B cell (primary cell): ENCODE measurements at regions of chr5 and their contacts with region 1.

Region 1: GRCh38 chr5:125006011-125006685 is 259.7 kb upstream of the ZNF608 start:
- DNase-seq: peak; percentile 80
- ATAC-seq: peak; percentile 67
- H3K4me3 ChIP-seq: peak overlapping the region in 3 of 5 experiments; percentile 18 to 46 (median 33)
- H3K4me3 Mint-ChIP-seq: peak overlapping the region; percentile 48
- H3K27ac ChIP-seq: peak overlapping the region; percentile 86 to 88
- H3K27ac Mint-ChIP-seq: peak overlapping the region; percentile 57
- H3K4me1 ChIP-seq: peaks cover 38 to 40% of the 10 kb centered on the region in 2 donors
- H3K4me1 Mint-ChIP-seq: peaks cover 57% of the 10 kb centered on the region
- H3K27me3 ChIP-seq: no peaks in the 10 kb centered on the region
- H3K27me3 Mint-ChIP-seq: no peaks in the 10 kb centered on the region
- CTCF ChIP-seq: no peak

Region 2: DNA sequence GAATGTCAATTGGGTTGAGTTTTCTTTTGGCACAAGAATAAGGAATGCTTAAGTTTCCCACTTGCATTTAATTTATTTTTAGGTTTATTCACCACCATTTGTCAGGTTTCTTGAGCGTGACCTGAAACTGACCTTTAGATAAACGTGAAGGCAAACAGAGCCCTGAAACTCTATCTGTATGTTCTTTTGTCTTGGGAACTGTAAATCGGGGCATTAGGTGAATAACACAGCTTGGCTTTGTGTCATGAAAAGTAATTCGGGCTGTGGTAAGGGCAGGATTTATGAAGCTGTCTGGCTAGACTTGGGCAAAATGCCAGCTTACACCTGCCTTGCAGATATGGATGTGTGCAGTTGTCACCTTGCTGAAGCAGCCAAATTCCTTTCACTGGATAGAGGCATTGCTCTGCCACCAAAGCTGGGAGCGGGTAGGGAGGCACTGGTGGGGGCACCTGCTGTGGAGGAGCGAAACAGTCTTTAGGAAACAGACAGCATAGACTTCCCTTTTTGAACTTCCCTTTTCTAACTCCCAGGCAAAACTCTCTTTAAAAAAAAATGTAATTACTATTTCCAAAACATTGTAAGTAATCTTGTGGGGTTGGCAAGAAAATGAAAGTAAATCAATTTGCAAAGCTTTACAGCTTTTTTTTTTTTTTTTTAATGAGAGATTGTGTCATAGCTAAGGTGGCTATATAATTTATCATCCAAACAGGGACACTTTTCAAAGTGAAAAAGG is 949.0 kb before region 1 on chr5:
- CTCF ChIA-PET with region 1: no interaction called
- POLR2A ChIA-PET with region 1: no interaction called
- intact Hi-C with region 1: loop called (anchors 5 kb)
- DNase-seq: peak; percentile 88
- ATAC-seq: peak; percentile 85
- H3K4me3 ChIP-seq: peak overlapping the region; percentile 30 to 57 (median 54)
- H3K4me3 Mint-ChIP-seq: peak overlapping the region; percentile 94
- H3K27ac ChIP-seq: peak overlapping the region; percentile 71 to 72
- H3K27ac Mint-ChIP-seq: peak overlapping the region; percentile 95
- H3K4me1 ChIP-seq: peaks cover 40 to 45% of the 10 kb centered on the region in 2 donors
- H3K4me1 Mint-ChIP-seq: peaks cover 56% of the 10 kb centered on the region
- H3K27me3 ChIP-seq: no peaks in the 10 kb centered on the region
- H3K27me3 Mint-ChIP-seq: no peaks in the 10 kb centered on the region
- CTCF ChIP-seq: no peak

Region 3: GRCh38 chr5:124524552-124525232 is 481.5 kb before region 1 on chr5:
- CTCF ChIA-PET with region 1: interaction called, 3 read pairs
- POLR2A ChIA-PET with region 1: no interaction called
- intact Hi-C with region 1: loop called (anchors 10 kb)
- DNase-seq: peak; percentile 83
- ATAC-seq: peak; percentile 95
- H3K4me3 ChIP-seq: no peak overlapping the region
- H3K4me3 Mint-ChIP-seq: no peak overlapping the region
- H3K27ac ChIP-seq: no peak overlapping the region
- H3K27ac Mint-ChIP-seq: no peak overlapping the region
- H3K4me1 ChIP-seq: peaks cover 14 to 15% of the 10 kb centered on the region in 2 donors
- H3K4me1 Mint-ChIP-seq: peaks cover 26% of the 10 kb centered on the region
- H3K27me3 ChIP-seq: no peaks in the 10 kb centered on the region
- H3K27me3 Mint-ChIP-seq: peaks cover 4% of the 10 kb centered on the region
- CTCF ChIP-seq: peak; percentile 74

Region 4: DNA sequence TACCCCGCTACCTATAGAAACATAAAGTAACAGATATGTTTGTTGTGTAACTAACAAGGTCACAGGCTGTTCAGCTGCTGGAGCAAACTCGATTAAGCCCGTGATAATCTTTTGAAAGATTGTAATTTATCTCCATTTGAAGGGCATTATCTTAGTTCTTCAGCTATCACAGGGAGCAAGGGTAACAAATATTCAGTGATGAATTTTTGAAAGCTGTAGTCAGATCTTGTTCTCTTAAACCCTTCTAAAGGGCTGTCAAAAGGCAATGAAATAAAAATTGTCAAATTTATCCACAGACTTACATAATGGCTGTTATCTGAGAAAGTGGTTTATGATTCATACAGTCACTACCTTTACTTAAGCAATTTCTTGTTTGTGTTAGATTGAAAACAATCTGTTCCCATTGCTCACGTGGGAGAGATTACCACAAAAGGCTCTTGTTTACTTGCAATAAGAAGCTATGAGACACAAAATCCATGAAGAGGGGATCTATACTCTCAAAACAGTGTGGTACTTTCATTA is 181.4 kb before region 1 on chr5:
- CTCF ChIA-PET with region 1: no interaction called
- POLR2A ChIA-PET with region 1: no interaction called
- intact Hi-C with region 1: loop called (anchors 1 kb)
- DNase-seq: no peak
- ATAC-seq: no peak
- H3K4me3 ChIP-seq: no peak overlapping the region
- H3K4me3 Mint-ChIP-seq: no peak overlapping the region
- H3K27ac ChIP-seq: peak overlapping the region in 1 of 2 donors; percentile 56
- H3K27ac Mint-ChIP-seq: peak overlapping the region; percentile 51
- H3K4me1 ChIP-seq: peaks cover 16 to 19% of the 10 kb centered on the region in 2 donors
- H3K4me1 Mint-ChIP-seq: peaks cover 18% of the 10 kb centered on the region
- H3K27me3 ChIP-seq: no peaks in the 10 kb centered on the region
- H3K27me3 Mint-ChIP-seq: no peaks in the 10 kb centered on the region
- CTCF ChIP-seq: no peak

Region 5: DNA sequence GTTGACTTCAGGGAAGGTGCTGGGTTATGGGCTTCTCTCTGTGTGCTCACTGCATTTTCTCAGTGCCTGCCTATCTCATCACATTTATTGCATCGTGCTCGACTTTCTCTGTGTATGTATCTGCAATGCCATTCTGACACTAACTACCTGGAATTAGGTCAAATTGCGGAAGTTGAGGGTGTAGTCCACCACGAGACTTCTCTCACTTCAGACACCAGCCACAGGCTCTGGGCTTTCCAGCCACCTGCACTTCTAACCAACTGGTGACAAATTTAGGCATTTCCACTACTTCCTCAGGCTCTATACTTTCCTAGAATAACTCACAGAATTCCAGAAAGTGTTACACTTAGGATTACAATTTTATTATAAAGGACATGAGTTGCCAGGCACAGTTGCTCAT is 71.1 kb before region 1 on chr5:
- CTCF ChIA-PET with region 1: no interaction called
- POLR2A ChIA-PET with region 1: no interaction called
- intact Hi-C with region 1: loop called (anchors 1 kb)
- DNase-seq: peak; percentile 81
- ATAC-seq: peak; percentile 69
- H3K4me3 ChIP-seq: no peak overlapping the region
- H3K4me3 Mint-ChIP-seq: peak overlapping the region; percentile 17
- H3K27ac ChIP-seq: peak overlapping the region; percentile 45 to 65
- H3K27ac Mint-ChIP-seq: peak overlapping the region; percentile 84
- H3K4me1 ChIP-seq: peaks cover 15 to 19% of the 10 kb centered on the region in 2 donors
- H3K4me1 Mint-ChIP-seq: peaks cover 17% of the 10 kb centered on the region
- H3K27me3 ChIP-seq: no peaks in the 10 kb centered on the region
- H3K27me3 Mint-ChIP-seq: no peaks in the 10 kb centered on the region
- CTCF ChIP-seq: no peak

Region 6: DNA sequence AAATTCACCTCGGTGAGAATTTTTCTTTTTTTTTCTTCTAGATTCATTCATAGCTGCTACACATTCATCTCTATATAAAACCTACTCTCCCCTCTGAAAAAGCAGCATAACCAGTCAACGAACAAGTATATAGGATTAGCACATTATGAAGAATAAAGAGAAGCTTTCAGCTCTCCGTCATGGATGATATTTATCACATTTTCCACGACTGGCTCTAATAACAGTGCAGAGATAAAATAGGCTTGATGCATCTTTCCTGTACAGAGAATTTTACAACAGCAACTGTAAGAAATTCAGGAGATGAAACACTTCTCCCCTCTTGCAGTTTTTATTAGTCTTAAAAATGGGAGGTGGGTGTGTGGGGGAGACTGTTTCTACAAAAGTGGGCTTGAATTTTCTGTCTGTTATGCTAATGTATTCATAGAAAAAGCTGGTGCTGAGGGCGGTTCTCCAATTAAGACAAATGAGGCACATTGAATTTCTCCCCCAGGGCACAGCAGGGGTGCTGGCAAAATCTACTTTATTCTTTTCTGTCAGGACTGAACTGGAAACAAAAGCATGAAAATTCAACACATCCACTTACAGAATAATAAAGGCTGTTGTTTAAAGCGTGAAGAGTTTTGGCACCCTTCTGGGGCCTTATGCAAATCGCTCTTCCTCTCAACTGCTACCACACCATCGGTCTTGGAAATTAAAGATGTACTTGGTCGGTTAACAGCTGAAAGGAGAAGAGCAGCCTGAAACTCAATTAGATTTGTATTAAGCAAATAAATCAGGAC is 25.8 kb before region 1 on chr5:
- CTCF ChIA-PET with region 1: no interaction called
- POLR2A ChIA-PET with region 1: interaction called, 3 read pairs
- intact Hi-C with region 1: loop called (anchors 2 kb)
- DNase-seq: peak; percentile 72
- ATAC-seq: peak; percentile 93
- H3K4me3 ChIP-seq: peak overlapping the region in 1 of 5 experiments; percentile 26
- H3K4me3 Mint-ChIP-seq: peak overlapping the region; percentile 64
- H3K27ac ChIP-seq: peak overlapping the region in 1 of 2 donors; percentile 43
- H3K27ac Mint-ChIP-seq: peak overlapping the region; percentile 15
- H3K4me1 ChIP-seq: peaks cover 49 to 52% of the 10 kb centered on the region in 2 donors
- H3K4me1 Mint-ChIP-seq: peaks cover 56% of the 10 kb centered on the region
- H3K27me3 ChIP-seq: no peaks in the 10 kb centered on the region
- H3K27me3 Mint-ChIP-seq: no peaks in the 10 kb centered on the region
- CTCF ChIP-seq: no peak

Region 7: GRCh38 chr5:126274076-126274762 is 1268.1 kb after region 1 on chr5:
- CTCF ChIA-PET with region 1: no interaction called
- POLR2A ChIA-PET with region 1: no interaction called
- intact Hi-C with region 1: no loop called
- DNase-seq: no peak
- ATAC-seq: no peak
- H3K4me3 ChIP-seq: no peak overlapping the region
- H3K4me3 Mint-ChIP-seq: no peak overlapping the region
- H3K27ac ChIP-seq: no peak overlapping the region
- H3K27ac Mint-ChIP-seq: no peak overlapping the region
- H3K4me1 ChIP-seq: no peaks in the 10 kb centered on the region
- H3K4me1 Mint-ChIP-seq: no peaks in the 10 kb centered on the region
- H3K27me3 ChIP-seq: no peaks in the 10 kb centered on the region
- H3K27me3 Mint-ChIP-seq: peaks cover 3% of the 10 kb centered on the region
- CTCF ChIP-seq: no peak